ENCODE measurements at regions of chr2 and their contacts with region 1.

Region 1: DNA sequence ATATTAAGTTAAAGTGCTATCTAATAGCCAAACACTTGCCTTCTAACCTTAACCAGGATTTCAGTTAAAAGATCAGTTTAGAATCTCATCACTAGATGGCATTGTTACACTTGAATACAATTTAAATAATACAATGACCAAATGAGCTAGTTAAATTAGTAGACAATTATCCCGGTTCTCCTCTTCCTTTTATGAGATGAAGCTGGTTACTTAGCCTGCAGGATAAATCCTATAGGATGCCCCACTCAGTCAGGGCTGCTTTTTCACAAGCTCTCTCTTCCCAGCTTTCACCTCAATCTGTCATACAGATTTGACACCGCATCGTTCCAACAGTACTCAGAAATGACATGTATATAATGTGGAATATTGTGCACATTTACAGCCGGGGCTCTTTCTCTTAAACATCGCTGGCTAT is 678.8 kb downstream of the KCNJ3 start:
- DNase-seq: peak; percentile 75
- H3K4me3 ChIP-seq: peak overlapping the region in 1 of 3 experiments; percentile 40
- H3K27ac ChIP-seq: peak overlapping the region; percentile 43
- H3K4me1 ChIP-seq: peaks cover 19% of the 10 kb centered on the region
- H3K27me3 ChIP-seq: no peaks in the 10 kb centered on the region
- CTCF ChIP-seq: peak; percentile 12 to 24
- POLR2A ChIP-seq: no peak

Region 2: GRCh38 chr2:155250800-155251199 is 126.5 kb before region 1 on chr2:
- CTCF ChIA-PET with region 1: no interaction called
- POLR2A ChIA-PET with region 1: no interaction called
- dilution Hi-C with region 1: no loop called
- intact Hi-C with region 1: no loop called
- DNase-seq: peak; percentile 17
- H3K4me3 ChIP-seq: no peak overlapping the region
- H3K27ac ChIP-seq: no peak overlapping the region
- H3K4me1 ChIP-seq: no peaks in the 10 kb centered on the region
- H3K27me3 ChIP-seq: no peaks in the 10 kb centered on the region
- CTCF ChIP-seq: peak; percentile 25 to 30
- POLR2A ChIP-seq: no peak

Region 3: GRCh38 chr2:155363349-155363888 is 13.9 kb before region 1 on chr2:
- CTCF ChIA-PET with region 1: interaction called, 17 read pairs
- POLR2A ChIA-PET with region 1: no interaction called
- dilution Hi-C with region 1: no loop called
- intact Hi-C with region 1: no loop called
- DNase-seq: no peak
- H3K4me3 ChIP-seq: no peak overlapping the region
- H3K27ac ChIP-seq: no peak overlapping the region
- H3K4me1 ChIP-seq: no peaks in the 10 kb centered on the region
- H3K27me3 ChIP-seq: peaks cover 0 to 1% of the 10 kb centered on the region in 2 experiments
- CTCF ChIP-seq: no peak
- POLR2A ChIP-seq: no peak

Region 4: DNA sequence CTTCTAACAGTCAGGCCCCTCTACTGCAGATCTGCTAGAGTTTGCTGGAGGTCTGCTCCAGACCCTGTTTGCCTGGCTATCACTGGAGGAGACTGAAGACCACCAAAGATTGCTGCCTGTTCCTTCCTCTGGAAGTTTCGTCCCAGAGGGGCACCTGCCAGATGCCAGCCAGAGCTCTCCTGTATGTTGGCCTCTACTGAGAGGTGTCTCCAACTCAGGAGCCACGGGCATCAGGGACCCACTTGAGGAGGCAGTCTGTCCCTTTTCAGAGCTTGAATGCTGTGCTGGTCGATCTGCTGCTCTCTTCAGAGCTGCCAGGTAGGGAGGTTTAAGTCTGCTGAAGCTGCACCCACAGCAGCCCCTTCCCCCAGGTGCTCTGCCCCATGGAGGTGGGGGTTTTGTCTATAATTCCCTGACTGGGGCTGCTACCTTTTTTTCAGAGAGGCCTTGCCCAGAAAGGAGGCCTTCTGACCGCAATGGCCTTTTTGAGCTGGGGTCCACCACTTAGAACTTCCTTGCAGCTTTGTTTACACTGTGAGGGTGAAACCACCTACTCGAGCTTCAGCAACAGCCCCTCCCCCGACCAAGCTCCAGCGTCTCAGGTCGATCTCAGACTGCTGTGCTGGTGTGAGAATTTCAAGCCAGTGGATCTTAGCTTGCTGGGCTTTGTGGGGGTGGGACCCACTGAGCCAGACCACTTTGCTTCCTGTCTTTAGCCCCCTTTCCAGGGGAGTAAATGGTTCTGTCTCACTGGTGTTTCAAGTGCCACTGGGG is 389.3 kb after region 1 on chr2:
- CTCF ChIA-PET with region 1: no interaction called
- POLR2A ChIA-PET with region 1: no interaction called
- dilution Hi-C with region 1: no loop called
- intact Hi-C with region 1: no loop called
- DNase-seq: no peak
- H3K4me3 ChIP-seq: no peak overlapping the region
- H3K27ac ChIP-seq: no peak overlapping the region
- H3K4me1 ChIP-seq: no peaks in the 10 kb centered on the region
- H3K27me3 ChIP-seq: no peaks in the 10 kb centered on the region
- CTCF ChIP-seq: no peak
- POLR2A ChIP-seq: no peak

Region 5: DNA sequence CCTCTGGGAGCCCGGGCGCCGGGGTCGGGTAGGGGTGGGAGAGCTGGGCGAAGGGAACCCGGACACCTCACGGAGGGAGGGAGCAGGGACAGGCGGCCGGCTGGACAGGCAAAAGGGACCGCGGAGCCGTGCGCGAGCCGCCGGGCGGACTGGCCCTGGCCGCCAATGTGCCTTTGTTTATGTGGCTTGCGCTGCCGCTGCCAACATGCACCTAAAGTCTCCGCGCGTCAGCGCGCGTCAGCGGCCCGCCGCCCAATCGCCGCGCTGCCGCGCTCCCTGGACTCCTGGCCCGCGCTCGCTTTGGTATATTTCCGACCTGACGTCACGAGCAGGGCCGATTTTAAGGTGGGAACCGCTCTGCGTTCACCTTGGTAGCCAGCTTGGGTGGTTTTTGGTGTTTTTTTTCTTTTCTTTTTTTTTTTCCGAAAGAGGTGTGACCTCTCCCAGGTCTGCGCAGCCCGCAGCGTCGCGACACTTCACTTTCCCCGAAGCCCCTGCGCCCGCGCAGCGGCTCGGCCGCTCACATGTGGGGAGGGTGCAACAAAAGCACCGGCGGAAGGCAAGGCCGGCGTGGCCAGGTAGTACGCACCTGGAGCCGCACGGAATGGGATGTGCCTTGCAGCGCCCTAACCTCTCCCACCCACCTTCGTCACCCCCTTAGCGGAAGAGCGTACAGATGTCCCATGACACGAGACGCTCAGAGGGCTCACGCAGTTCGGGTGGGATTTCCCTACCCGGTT is 955.4 kb after region 1 on chr2 and contains the start of gene NR4A2:
- CTCF ChIA-PET with region 1: interaction called, 24 read pairs
- POLR2A ChIA-PET with region 1: no interaction called
- dilution Hi-C with region 1: no loop called
- intact Hi-C with region 1: loop called (anchors 2 kb)
- DNase-seq: peak; percentile 87
- H3K4me3 ChIP-seq: peak within 1 kb of the TSS; percentile 58 to 75 (median 72)
- H3K27ac ChIP-seq: peak within 1 kb of the TSS; percentile 98
- H3K4me1 ChIP-seq: peaks cover 14% of the 10 kb centered on the region
- H3K27me3 ChIP-seq: peaks cover 3 to 14% of the 10 kb centered on the region in 2 experiments
- CTCF ChIP-seq: no peak
- POLR2A ChIP-seq: peak; percentile 36
- total RNA-seq, gene NR4A2: 1.0 and 1.8 TPM in 2 replicates

Region 6: GRCh38 chr2:156490466-156490840 is 1113.2 kb after region 1 on chr2:
- CTCF ChIA-PET with region 1: no interaction called
- POLR2A ChIA-PET with region 1: no interaction called
- dilution Hi-C with region 1: no loop called
- intact Hi-C with region 1: loop called (anchors 10 kb)
- DNase-seq: no peak
- H3K4me3 ChIP-seq: no peak overlapping the region
- H3K27ac ChIP-seq: no peak overlapping the region
- H3K4me1 ChIP-seq: no peaks in the 10 kb centered on the region
- H3K27me3 ChIP-seq: no peaks in the 10 kb centered on the region
- CTCF ChIP-seq: no peak
- POLR2A ChIP-seq: no peak

Region 7: GRCh38 chr2:157055660-157056199 is 1678.5 kb after region 1 on chr2:
- CTCF ChIA-PET with region 1: interaction called, 25 read pairs
- POLR2A ChIA-PET with region 1: no interaction called
- dilution Hi-C with region 1: no loop called
- intact Hi-C with region 1: loop called (anchors 1 kb)
- DNase-seq: peak; percentile 61
- H3K4me3 ChIP-seq: peak overlapping the region in 1 of 3 experiments; percentile 40
- H3K27ac ChIP-seq: peak overlapping the region; percentile 66
- H3K4me1 ChIP-seq: peaks cover 35% of the 10 kb centered on the region
- H3K27me3 ChIP-seq: peaks cover 0 to 1% of the 10 kb centered on the region in 2 experiments
- CTCF ChIP-seq: peak; percentile 26 to 29
- POLR2A ChIP-seq: no peak

Region 8: GRCh38 chr2:157302492-157303099 is 1925.3 kb after region 1 on chr2:
- CTCF ChIA-PET with region 1: interaction called, 19 read pairs
- POLR2A ChIA-PET with region 1: no interaction called
- dilution Hi-C with region 1: no loop called
- intact Hi-C with region 1: no loop called
- DNase-seq: peak; percentile 58
- H3K4me3 ChIP-seq: no peak overlapping the region
- H3K27ac ChIP-seq: no peak overlapping the region
- H3K4me1 ChIP-seq: no peaks in the 10 kb centered on the region
- H3K27me3 ChIP-seq: peaks cover 0 to 2% of the 10 kb centered on the region in 2 experiments
- CTCF ChIP-seq: peak; percentile 62 to 64
- POLR2A ChIP-seq: no peak

Measured in endothelial cell of umbilical vein (primary cell).